A673 (cell line): ENCODE measurements at regions of chr4 and their contacts with region 1.

Region 1: GRCh38 chr4:143482840-143483239 is 30.7 kb upstream of the SMARCA5 start:
- DNase-seq: peak; percentile 68
- H3K4me3 ChIP-seq: no peak overlapping the region
- H3K27ac ChIP-seq: no peak overlapping the region
- H3K4me1 ChIP-seq: no peaks in the 10 kb centered on the region
- H3K27me3 ChIP-seq: no peaks in the 10 kb centered on the region
- CTCF ChIP-seq: peak; percentile 70

Region 2: DNA sequence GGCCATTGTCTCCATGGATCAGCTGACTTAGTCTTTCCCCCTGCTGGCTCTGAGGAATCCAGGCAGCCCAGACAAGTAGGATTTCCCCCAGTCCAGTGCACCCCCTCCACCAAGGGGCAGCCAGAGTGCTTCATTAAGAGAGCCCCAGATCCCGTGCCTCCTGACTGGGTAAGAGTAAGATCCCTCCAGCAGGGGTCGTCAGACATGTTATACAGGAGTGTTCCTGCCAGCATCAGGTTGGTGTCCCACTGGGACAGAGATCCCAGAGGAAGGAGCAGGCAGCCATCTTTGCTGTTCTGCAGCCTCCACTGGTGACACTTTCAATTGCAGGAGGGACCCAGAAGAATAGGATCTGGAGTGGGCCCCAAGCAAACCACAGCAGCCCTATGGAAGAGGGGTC is 607.7 kb before region 1 on chr4:
- CTCF ChIA-PET with region 1: no interaction called
- POLR2A ChIA-PET with region 1: no interaction called
- intact Hi-C with region 1: loop called (anchors 10 kb)
- DNase-seq: peak; percentile 10
- H3K4me3 ChIP-seq: no peak overlapping the region
- H3K27ac ChIP-seq: no peak overlapping the region
- H3K4me1 ChIP-seq: no peaks in the 10 kb centered on the region
- H3K27me3 ChIP-seq: no peaks in the 10 kb centered on the region
- CTCF ChIP-seq: no peak

Region 3: GRCh38 chr4:142984871-142985585 is 497.8 kb before region 1 on chr4:
- CTCF ChIA-PET with region 1: no interaction called
- POLR2A ChIA-PET with region 1: no interaction called
- intact Hi-C with region 1: loop called (anchors 5 kb)
- DNase-seq: peak; percentile 41
- H3K4me3 ChIP-seq: no peak overlapping the region
- H3K27ac ChIP-seq: no peak overlapping the region
- H3K4me1 ChIP-seq: no peaks in the 10 kb centered on the region
- H3K27me3 ChIP-seq: no peaks in the 10 kb centered on the region
- CTCF ChIP-seq: peak; percentile 59

Region 4: DNA sequence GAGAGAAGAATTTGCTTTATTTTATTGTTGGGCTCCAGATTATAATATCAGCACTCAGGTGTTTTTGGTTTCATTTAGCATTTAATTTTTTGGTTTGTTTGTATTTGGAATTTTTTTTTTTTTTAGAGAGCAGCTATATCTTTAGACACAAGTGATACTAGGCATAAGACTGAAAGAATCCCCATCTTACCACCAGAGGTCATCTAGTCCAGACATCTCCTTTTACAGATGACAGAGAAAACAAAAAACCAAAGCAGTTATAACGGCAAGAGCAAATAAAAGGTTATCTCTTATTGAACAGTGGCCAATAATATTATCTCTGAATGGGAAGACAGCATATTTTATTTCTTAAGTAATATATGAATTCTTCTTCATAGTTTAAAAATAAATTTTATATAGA is 275.3 kb before region 1 on chr4:
- CTCF ChIA-PET with region 1: no interaction called
- POLR2A ChIA-PET with region 1: no interaction called
- intact Hi-C with region 1: loop called (anchors 2 kb)
- DNase-seq: peak; percentile 34
- H3K4me3 ChIP-seq: no peak overlapping the region
- H3K27ac ChIP-seq: no peak overlapping the region
- H3K4me1 ChIP-seq: no peaks in the 10 kb centered on the region
- H3K27me3 ChIP-seq: no peaks in the 10 kb centered on the region
- CTCF ChIP-seq: peak; percentile 46; the same call in 1 of the 2 replicates

Region 5: GRCh38 chr4:143375313-143376073 is 107.3 kb before region 1 on chr4:
- CTCF ChIA-PET with region 1: no interaction called
- POLR2A ChIA-PET with region 1: no interaction called
- intact Hi-C with region 1: loop called (anchors 2 kb)
- DNase-seq: peak; percentile 82
- H3K4me3 ChIP-seq: no peak overlapping the region
- H3K27ac ChIP-seq: no peak overlapping the region
- H3K4me1 ChIP-seq: peaks cover 24% of the 10 kb centered on the region
- H3K27me3 ChIP-seq: no peaks in the 10 kb centered on the region
- CTCF ChIP-seq: peak; percentile 74